ENCODE measurements at regions of chr18 and their contacts with region 1.

Region 1: GRCh38 chr18:42365591-42365990 is 410.6 kb downstream of the PIK3C3 start:
- DNase-seq: no peak

Region 2: DNA sequence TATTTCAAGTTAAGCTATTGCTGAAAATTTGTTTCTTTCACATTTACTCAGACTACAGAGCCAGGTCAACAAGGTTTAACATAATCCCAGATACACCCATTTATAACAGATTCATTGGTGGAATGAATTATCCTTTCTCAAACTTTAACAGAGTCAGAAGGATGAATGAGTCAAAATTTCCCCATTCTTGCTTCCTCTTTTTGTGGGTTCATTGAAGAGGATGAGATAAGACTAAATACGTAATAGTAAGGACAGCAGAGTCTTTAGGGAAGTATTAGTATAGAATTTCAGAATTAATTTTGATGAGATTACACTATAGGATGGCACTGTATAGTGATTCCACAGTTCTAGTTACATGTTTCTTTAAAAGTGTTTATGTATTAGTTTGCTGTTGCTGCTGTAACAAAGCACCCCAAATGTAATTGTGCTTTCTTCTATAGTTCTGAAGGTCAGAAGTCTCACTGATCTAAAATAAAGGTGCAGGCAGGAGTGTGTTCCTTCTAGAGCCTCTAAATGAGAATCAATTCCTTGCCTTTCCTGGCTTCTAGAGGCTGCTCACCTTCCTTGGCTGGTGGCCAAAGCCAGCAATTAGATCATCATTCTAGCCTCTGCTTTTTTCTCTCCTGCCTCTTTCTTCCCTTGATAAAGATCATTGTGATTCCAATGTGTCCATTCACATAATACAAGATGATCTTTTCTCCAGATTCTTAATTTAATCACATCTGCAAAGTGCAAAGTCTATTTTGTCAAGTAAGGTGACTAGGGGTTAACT is 719.8 kb before region 1 on chr18:
- intact Hi-C with region 1: loop called in 1 of 2 experiments (anchors 5 kb)
- DNase-seq: no peak